Testis (tissue), 5 donors: ENCODE measurements at regions of chr3 and their contacts with region 1.

Region 1: GRCh38 chr3:158727206-158728060 is 4.8 kb downstream of the RARRES1 start:
- DNase-seq: peak; percentile 77
- H3K4me3 ChIP-seq: no peak overlapping the region
- H3K27ac ChIP-seq: no peak overlapping the region
- H3K4me1 ChIP-seq: peaks cover 3% of the 10 kb centered on the region
- H3K27me3 ChIP-seq: no peaks in the 10 kb centered on the region
- CTCF ChIP-seq: peak; percentile 87 to 89 (median 88)
- POLR2A ChIP-seq: no peak

Region 2: GRCh38 chr3:158790901-158791589 is 63.6 kb after region 1 on chr3:
- intact Hi-C with region 1: loop called (anchors 5 kb)
- DNase-seq: no peak
- H3K4me3 ChIP-seq: no peak overlapping the region
- H3K27ac ChIP-seq: no peak overlapping the region
- H3K4me1 ChIP-seq: no peaks in the 10 kb centered on the region
- H3K27me3 ChIP-seq: no peaks in the 10 kb centered on the region
- CTCF ChIP-seq: peak; percentile 76 to 78 (median 76)
- POLR2A ChIP-seq: no peak